ENCODE measurements at regions of chr7 and their contacts with region 1.

Region 1: GRCh38 chr7:126495001-126495400 is 757.7 kb downstream of the GRM8 start:
- DNase-seq: no peak
- H3K4me3 ChIP-seq: no peak overlapping the region
- H3K27ac ChIP-seq: no peak overlapping the region
- H3K4me1 ChIP-seq: no peaks in the 10 kb centered on the region
- H3K27me3 ChIP-seq: no peaks in the 10 kb centered on the region
- CTCF ChIP-seq: no peak
- POLR2A ChIP-seq: no peak

Region 2: GRCh38 chr7:126511046-126511445 is 16.0 kb after region 1 on chr7:
- intact Hi-C with region 1: loop called (anchors 2 kb)
- DNase-seq: no peak
- H3K4me3 ChIP-seq: no peak overlapping the region
- H3K27ac ChIP-seq: no peak overlapping the region
- H3K4me1 ChIP-seq: no peaks in the 10 kb centered on the region
- H3K27me3 ChIP-seq: no peaks in the 10 kb centered on the region
- CTCF ChIP-seq: no peak
- POLR2A ChIP-seq: no peak

Measured in breast epithelium (tissue), 4 donors.